ENCODE measurements at regions of chr2 and their contacts with region 1.

Region 1: DNA sequence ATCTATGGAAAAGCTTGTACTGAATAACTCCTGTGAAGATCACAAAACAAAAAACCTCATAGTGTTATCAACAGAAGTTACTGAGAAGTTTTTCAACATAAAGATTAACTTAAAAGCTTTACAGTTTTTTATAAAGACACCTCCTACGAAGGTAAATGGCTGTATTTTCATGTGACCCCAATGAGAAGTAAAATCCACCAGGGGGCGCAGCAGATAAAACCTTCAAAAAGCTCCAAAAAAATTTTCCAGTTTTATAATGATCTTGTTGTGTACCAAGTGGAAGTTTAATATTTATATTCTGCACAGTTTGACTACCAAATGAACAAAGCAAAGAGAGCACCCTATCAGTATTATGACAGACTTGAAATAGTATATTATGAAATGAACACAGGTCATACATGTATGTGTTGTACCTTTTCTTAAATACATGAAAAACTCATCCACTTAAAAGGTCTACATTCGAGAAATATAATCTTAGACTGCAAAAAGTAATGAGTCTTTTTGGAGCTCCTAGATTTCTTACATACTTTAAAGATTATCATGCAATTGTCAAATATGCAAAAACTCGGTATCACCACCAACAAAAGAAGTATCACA is 38.5 kb downstream of the PNO1 start:
- DNase-seq: peak; percentile 25 to 69 (median 44)
- H3K4me3 ChIP-seq: no peak overlapping the region
- H3K4me3 Mint-ChIP-seq: no peak overlapping the region
- H3K27ac ChIP-seq: no peak overlapping the region
- H3K27ac Mint-ChIP-seq: peak overlapping the region in 6 of 8 donors; percentile 12 to 71 (median 36)
- H3K4me1 ChIP-seq: peaks cover 24% of the 10 kb centered on the region
- H3K4me1 Mint-ChIP-seq: peaks cover 47 to 76% (median 71%) of the 10 kb centered on the region in 3 donors
- H3K27me3 ChIP-seq: no peaks in the 10 kb centered on the region
- H3K27me3 Mint-ChIP-seq: no peaks in the 10 kb centered on the region

Region 2: GRCh38 chr2:68206793-68207192 is 10.6 kb after region 1 on chr2:
- CTCF ChIA-PET with region 1: interaction called, 11 read pairs
- POLR2A ChIA-PET with region 1: no interaction called
- DNase-seq: no peak
- H3K4me3 ChIP-seq: no peak overlapping the region
- H3K4me3 Mint-ChIP-seq: peak overlapping the region in 3 of 7 donors; percentile 1 to 48 (median 23)
- H3K27ac ChIP-seq: no peak overlapping the region
- H3K27ac Mint-ChIP-seq: peak overlapping the region; percentile 6 to 67 (median 38)
- H3K4me1 ChIP-seq: peaks cover 49% of the 10 kb centered on the region
- H3K4me1 Mint-ChIP-seq: peaks cover 59 to 85% (median 79%) of the 10 kb centered on the region in 3 donors
- H3K27me3 ChIP-seq: no peaks in the 10 kb centered on the region
- H3K27me3 Mint-ChIP-seq: no peaks in the 10 kb centered on the region

Region 3: GRCh38 chr2:68251187-68251854 is 55.1 kb after region 1 on chr2:
- CTCF ChIA-PET with region 1: interaction called, 16 read pairs
- POLR2A ChIA-PET with region 1: no interaction called
- DNase-seq: peak; percentile 60 to 87 (median 80)
- H3K4me3 ChIP-seq: peak overlapping the region; percentile 80
- H3K4me3 Mint-ChIP-seq: peak overlapping the region; percentile 89 to 99 (median 93)
- H3K27ac ChIP-seq: peak overlapping the region; percentile 87
- H3K27ac Mint-ChIP-seq: peak overlapping the region in 5 of 8 donors; percentile 82 to 97 (median 95)
- H3K4me1 ChIP-seq: peaks cover 51% of the 10 kb centered on the region
- H3K4me1 Mint-ChIP-seq: peaks cover 29 to 36% (median 36%) of the 10 kb centered on the region in 3 donors
- H3K27me3 ChIP-seq: no peaks in the 10 kb centered on the region
- H3K27me3 Mint-ChIP-seq: peaks cover 0 to 9% of the 10 kb centered on the region in 2 donors

Region 4: GRCh38 chr2:68282811-68283418 is 86.7 kb after region 1 on chr2:
- CTCF ChIA-PET with region 1: interaction called, 19 read pairs
- POLR2A ChIA-PET with region 1: no interaction called
- DNase-seq: peak in 3 of 5 donors; percentile 2 to 40 (median 40)
- H3K4me3 ChIP-seq: no peak overlapping the region
- H3K4me3 Mint-ChIP-seq: no peak overlapping the region
- H3K27ac ChIP-seq: no peak overlapping the region
- H3K27ac Mint-ChIP-seq: no peak overlapping the region
- H3K4me1 ChIP-seq: peaks cover 4% of the 10 kb centered on the region
- H3K4me1 Mint-ChIP-seq: peaks cover 0 to 7% (median 0%) of the 10 kb centered on the region in 3 donors
- H3K27me3 ChIP-seq: no peaks in the 10 kb centered on the region
- H3K27me3 Mint-ChIP-seq: peaks cover 11 to 27% of the 10 kb centered on the region in 2 donors

Region 5: GRCh38 chr2:68379184-68379708 is 183.0 kb after region 1 on chr2:
- CTCF ChIA-PET with region 1: no interaction called
- POLR2A ChIA-PET with region 1: no interaction called
- DNase-seq: peak in 4 of 5 donors; percentile 20 to 74 (median 50)
- H3K4me3 ChIP-seq: no peak overlapping the region
- H3K4me3 Mint-ChIP-seq: peak overlapping the region; percentile 19 to 90 (median 74)
- H3K27ac ChIP-seq: no peak overlapping the region
- H3K27ac Mint-ChIP-seq: peak overlapping the region; percentile 79 to 98 (median 95)
- H3K4me1 ChIP-seq: peaks cover 58% of the 10 kb centered on the region
- H3K4me1 Mint-ChIP-seq: peaks cover 75 to 97% (median 96%) of the 10 kb centered on the region in 3 donors
- H3K27me3 ChIP-seq: no peaks in the 10 kb centered on the region
- H3K27me3 Mint-ChIP-seq: no peaks in the 10 kb centered on the region